ENCODE measurements at regions of chr14 and their contacts with region 1.

Region 1: GRCh38 chr14:59483900-59484638 is at the starts of genes JKAMP and L3HYPDH:
- H3K4me3 ChIP-seq: peak within 1 kb of the TSS; percentile 84
- H3K27ac ChIP-seq: peak within 1 kb of the TSS; percentile 84
- H3K4me1 ChIP-seq: 0 out of 2 replicates have a peak, but pooled peaks cover 3% of the 10 kb centered on the region
- CTCF ChIP-seq: peak; percentile 95

Region 2: GRCh38 chr14:59464486-59465315 is 19.4 kb before region 1 on chr14:
- CTCF ChIA-PET with region 1: interaction called, 4 read pairs
- POLR2A ChIA-PET with region 1: interaction called, 18 read pairs
- H3K4me3 ChIP-seq: peak overlapping the region; percentile 30
- H3K27ac ChIP-seq: peak overlapping the region; percentile 37; the same call in 1 of the 2 replicates
- H3K4me1 ChIP-seq: no peaks in the 10 kb centered on the region
- CTCF ChIP-seq: no peak